ENCODE measurements at regions of chr6 and their contacts with region 1.

Region 1: GRCh38 chr6:118283766-118284165 is 264.3 kb upstream of the PLN start:
- DNase-seq: peak; percentile 52
- H3K4me3 ChIP-seq: no peak overlapping the region
- H3K27ac ChIP-seq: no peak overlapping the region
- H3K4me1 ChIP-seq: no peaks in the 10 kb centered on the region
- CTCF ChIP-seq: peak; percentile 83

Region 2: GRCh38 chr6:118252474-118252873 is 31.3 kb before region 1 on chr6:
- CTCF ChIA-PET with region 1: no interaction called
- POLR2A ChIA-PET with region 1: no interaction called
- intact Hi-C with region 1: no loop called
- DNase-seq: peak; percentile 3
- H3K4me3 ChIP-seq: no peak overlapping the region
- H3K27ac ChIP-seq: no peak overlapping the region
- H3K4me1 ChIP-seq: peaks cover 9% of the 10 kb centered on the region
- CTCF ChIP-seq: peak; percentile 55

Region 3: GRCh38 chr6:118344014-118344670 is 60.4 kb after region 1 on chr6:
- CTCF ChIA-PET with region 1: no interaction called
- POLR2A ChIA-PET with region 1: no interaction called
- intact Hi-C with region 1: no loop called
- DNase-seq: no peak
- H3K4me3 ChIP-seq: no peak overlapping the region
- H3K27ac ChIP-seq: no peak overlapping the region
- H3K4me1 ChIP-seq: no peaks in the 10 kb centered on the region
- CTCF ChIP-seq: no peak

Region 4: GRCh38 chr6:118509009-118509617 is 225.3 kb after region 1 on chr6:
- CTCF ChIA-PET with region 1: no interaction called
- POLR2A ChIA-PET with region 1: no interaction called
- intact Hi-C with region 1: loop called (anchors 5 kb)
- DNase-seq: peak; percentile 11
- H3K4me3 ChIP-seq: no peak overlapping the region
- H3K27ac ChIP-seq: no peak overlapping the region
- H3K4me1 ChIP-seq: no peaks in the 10 kb centered on the region
- CTCF ChIP-seq: peak; percentile 92

Region 5: DNA sequence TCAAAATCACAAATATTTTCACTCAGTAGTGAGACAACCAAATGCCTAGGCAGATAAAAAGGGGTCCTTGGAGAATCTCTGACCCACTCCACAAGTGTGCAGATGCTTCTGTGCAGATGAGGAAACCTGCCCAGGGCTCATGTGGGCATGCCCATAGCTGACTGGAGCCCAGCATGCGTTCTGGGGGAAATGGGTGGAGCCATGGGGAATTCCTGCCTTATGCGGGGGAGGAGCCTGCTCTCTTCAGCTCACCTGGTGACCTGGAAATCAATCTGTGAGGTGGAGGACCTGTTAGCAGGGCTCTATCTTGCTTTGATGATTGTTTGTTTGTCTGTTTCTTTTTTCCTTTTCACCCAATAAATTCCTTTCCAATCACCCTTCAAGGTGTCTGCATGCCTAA is 240.9 kb after region 1 on chr6:
- CTCF ChIA-PET with region 1: no interaction called
- POLR2A ChIA-PET with region 1: no interaction called
- intact Hi-C with region 1: no loop called
- DNase-seq: no peak
- H3K4me3 ChIP-seq: no peak overlapping the region
- H3K27ac ChIP-seq: no peak overlapping the region
- H3K4me1 ChIP-seq: no peaks in the 10 kb centered on the region
- CTCF ChIP-seq: no peak

Region 6: GRCh38 chr6:118551063-118552053 is 267.6 kb after region 1 on chr6:
- CTCF ChIA-PET with region 1: no interaction called
- POLR2A ChIA-PET with region 1: no interaction called
- intact Hi-C with region 1: loop called (anchors 2 kb)
- DNase-seq: peak; percentile 51
- H3K4me3 ChIP-seq: no peak overlapping the region
- H3K27ac ChIP-seq: no peak overlapping the region
- H3K4me1 ChIP-seq: no peaks in the 10 kb centered on the region
- CTCF ChIP-seq: peak; percentile 83

Region 7: GRCh38 chr6:118776607-118777549 is 493.1 kb after region 1 on chr6:
- CTCF ChIA-PET with region 1: no interaction called
- POLR2A ChIA-PET with region 1: no interaction called
- intact Hi-C with region 1: loop called (anchors 10 kb)
- DNase-seq: peak; percentile 70
- H3K4me3 ChIP-seq: no peak overlapping the region
- H3K27ac ChIP-seq: no peak overlapping the region
- H3K4me1 ChIP-seq: no peaks in the 10 kb centered on the region
- CTCF ChIP-seq: peak; percentile 95

Region 8: GRCh38 chr6:118800394-118801071 is 516.8 kb after region 1 on chr6:
- CTCF ChIA-PET with region 1: no interaction called
- POLR2A ChIA-PET with region 1: interaction called, 3 read pairs
- intact Hi-C with region 1: loop called (anchors 10 kb)
- DNase-seq: peak; percentile 86
- H3K4me3 ChIP-seq: no peak overlapping the region
- H3K27ac ChIP-seq: no peak overlapping the region
- H3K4me1 ChIP-seq: no peaks in the 10 kb centered on the region
- CTCF ChIP-seq: peak; percentile 95